Activated naive CD4-positive, alpha-beta T cell treated with anti-CD3 and anti-CD28 coated beads, Interleukin-2, amount 10 ng/mL, durations not matched to agents 7 days and 5 days (primary cell): ENCODE measurements at regions of chr19 and their contacts with region 1.

Region 1: GRCh38 chr19:15091901-15092753 is 10.1 kb downstream of the OR1I1 start:
- DNase-seq: peak; percentile 56
- H3K4me3 Mint-ChIP-seq: no peak overlapping the region
- H3K27ac Mint-ChIP-seq: no peak overlapping the region
- H3K4me1 Mint-ChIP-seq: peaks cover 5% of the 10 kb centered on the region
- H3K27me3 Mint-ChIP-seq: peaks cover 2% of the 10 kb centered on the region

Region 2: DNA sequence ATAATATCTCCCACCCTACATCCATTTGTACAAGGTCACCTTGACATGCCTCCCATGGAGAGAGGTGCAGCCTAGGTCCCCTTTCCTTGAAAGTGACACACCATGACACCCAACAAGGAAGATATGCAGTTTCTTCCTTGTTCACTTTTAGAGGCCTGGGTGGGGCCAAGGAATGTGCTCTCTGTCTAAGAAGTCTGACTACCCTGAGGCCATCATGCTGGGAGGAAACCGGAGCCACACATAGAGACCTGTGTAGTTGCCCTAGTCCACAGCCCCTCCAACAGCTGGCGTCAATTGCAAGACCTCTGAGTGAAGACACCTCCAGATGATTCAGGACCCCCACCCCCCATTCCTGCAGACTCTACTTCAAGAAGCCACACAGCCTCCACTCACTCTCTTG is 26.1 kb after region 1 on chr19:
- CTCF ChIA-PET with region 1: no interaction called
- DNase-seq: no peak
- H3K4me3 Mint-ChIP-seq: no peak overlapping the region
- H3K27ac Mint-ChIP-seq: no peak overlapping the region
- H3K4me1 Mint-ChIP-seq: no peaks in the 10 kb centered on the region
- H3K27me3 Mint-ChIP-seq: no peaks in the 10 kb centered on the region

Region 3: GRCh38 chr19:15154002-15154612 is 62.0 kb after region 1 on chr19:
- CTCF ChIA-PET with region 1: interaction called, 21 read pairs
- DNase-seq: peak; percentile 63
- H3K4me3 Mint-ChIP-seq: no peak overlapping the region
- H3K27ac Mint-ChIP-seq: no peak overlapping the region
- H3K4me1 Mint-ChIP-seq: no peaks in the 10 kb centered on the region
- H3K27me3 Mint-ChIP-seq: peaks cover 15% of the 10 kb centered on the region